Right ventricle myocardium inferior (tissue), 1 donor: ENCODE measurements at regions of chr11 and their contacts with region 1.

Region 1: DNA sequence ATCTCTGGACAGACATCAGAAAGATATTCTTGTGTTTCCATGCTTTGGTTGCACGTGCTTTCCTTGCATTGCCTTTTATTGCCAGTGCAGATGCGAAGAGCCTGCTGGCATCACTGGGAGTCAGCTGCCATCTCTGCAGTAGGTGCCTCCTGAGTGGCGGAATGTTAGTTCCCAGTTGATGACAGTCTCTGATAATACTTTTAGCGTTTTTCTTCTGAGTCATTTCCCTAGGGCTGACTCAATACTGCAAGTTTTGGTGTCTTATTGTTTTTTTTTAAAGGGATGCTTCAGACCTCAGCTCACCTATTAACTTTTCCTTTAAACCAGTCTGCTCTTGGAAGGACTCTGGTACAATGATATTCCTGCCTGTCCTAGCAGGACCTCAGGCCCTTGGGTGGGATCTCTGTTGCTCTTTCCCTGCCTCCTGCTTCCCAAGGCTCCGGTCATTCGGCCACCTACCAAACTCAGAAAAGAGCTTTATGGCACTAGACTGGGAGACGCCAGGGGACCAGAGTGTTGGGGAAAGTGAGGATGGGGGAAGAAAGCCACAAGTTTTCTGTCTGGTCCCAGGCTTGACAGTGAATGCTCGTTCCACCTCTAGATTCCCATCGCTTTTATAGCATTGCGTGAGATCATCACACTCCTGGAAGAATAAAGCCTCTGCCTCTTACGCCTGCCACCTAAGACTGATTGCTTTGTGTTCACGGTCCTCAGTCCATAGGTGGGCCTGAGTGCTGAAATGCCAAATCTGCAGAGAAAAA is 308.7 kb downstream of the DDX10 start:
- DNase-seq: no peak
- ATAC-seq: no peak

Region 2: DNA sequence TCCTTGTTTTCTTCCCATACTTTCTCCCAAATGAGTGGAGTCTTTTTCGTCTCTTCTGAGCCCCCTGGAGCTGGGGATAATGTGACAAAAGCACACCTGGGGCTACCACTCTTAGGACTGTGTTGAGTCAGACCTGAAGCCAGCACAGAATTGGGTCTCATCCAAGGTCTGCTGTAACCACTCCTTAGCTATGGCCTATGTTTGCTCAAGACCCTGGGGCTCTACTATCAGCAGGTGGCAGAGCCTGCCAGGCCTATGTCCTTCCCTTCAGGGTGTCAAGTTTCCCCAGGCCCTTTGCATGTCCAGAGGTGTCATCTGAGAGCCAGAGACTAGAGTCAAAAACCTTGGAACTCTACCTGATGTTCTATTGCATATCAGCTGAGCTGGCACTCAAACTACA is 26.9 kb after region 1 on chr11:
- intact Hi-C with region 1: no loop called
- DNase-seq: no peak
- ATAC-seq: no peak

Region 3: DNA sequence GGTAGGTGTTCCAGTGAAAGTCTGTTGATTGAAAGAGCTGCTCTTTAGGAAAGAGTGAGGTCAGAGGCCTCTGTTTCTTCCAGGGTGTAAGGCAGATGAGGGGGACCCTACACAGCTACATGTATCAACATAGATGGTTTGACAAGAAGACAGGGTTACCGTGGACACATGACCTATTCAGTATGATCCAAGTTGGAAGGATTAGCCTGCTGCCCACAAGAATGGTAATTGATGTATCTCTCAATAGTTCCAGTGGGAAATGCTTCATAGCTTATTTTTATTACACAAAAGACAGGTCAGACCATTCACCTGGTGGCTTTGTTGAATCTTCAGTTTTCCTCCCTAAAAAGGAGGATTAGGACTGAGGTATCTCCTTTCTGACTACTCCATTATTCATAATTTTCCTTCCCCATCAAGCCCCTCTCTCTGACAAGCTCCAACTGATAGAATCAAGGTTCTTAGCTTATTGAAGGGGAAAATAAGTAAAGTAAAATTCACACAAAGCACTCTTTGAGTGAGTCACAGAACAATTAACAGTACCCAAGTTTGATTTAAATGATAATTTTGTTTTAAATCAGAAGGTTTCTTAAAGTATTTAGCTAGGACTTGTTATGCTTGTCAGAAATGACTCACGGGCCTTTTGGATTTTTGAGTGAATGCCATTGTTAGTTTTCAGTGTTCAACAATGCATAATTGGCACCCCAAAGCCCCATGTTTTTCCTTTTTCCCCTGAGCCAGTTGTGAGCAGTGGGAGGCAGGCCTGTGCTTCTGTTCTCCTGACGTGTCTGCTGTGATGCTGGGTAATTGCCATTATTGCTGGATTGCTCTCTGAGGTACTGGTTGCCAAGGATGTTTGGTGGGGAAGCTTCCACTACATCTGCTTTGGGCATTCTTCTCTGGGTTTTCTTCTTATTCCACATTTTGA is 64.5 kb after region 1 on chr11:
- intact Hi-C with region 1: no loop called
- DNase-seq: no peak
- ATAC-seq: no peak

Region 4: DNA sequence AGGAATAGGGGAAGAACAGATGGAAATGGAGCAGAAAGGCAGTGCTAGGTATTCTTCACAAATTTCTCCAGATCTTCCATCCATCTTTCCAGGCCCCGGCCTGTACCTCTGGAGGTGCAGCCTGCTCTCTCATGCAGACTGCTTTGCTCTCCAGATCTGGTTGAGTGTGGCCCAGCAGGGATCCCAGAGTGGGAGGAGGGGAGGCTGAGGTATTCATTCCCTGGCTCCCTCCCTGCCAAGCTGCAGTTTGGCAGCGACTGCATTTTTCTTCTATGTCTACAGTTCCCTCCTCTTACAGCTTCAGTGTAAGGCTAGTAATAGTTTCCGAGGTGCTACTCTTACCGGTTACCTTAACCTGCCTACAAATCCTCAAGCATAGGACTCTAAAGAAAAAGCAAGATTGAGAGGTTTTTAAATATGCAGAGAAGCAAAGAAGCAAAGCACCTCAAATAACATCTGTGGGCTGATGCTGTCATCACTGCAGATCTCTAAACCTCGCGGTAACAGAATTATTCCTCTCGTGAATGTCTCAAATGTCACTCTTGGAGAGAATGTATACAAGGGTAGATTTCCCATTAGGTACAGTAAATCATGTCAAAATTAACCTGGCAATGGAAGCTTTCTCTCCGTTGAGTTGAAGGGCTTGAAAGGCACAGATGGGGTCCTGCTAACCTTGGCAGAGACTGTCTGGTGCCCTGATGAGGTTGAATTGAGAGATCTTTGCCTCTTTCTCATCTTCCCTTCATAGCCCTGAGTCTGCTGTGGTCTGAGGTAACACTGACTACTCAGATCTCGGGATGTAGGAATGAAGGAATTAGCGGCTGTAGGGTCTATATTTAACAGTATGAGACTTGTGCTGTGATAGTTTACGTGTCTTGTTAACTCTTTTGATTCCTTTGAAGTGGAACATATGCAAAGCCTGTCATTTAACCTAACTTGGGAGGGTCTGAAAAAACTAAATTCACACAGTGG is 150.5 kb after region 1 on chr11:
- intact Hi-C with region 1: loop called (anchors 5 kb)
- DNase-seq: peak; percentile 70
- ATAC-seq: peak; percentile 94

Region 5: GRCh38 chr11:109300211-109300610 is 326.6 kb after region 1 on chr11:
- intact Hi-C with region 1: loop called (anchors 2 kb)
- DNase-seq: no peak
- ATAC-seq: no peak